ENCODE measurements at regions of chr6 and their contacts with region 1.

Region 1: GRCh38 chr6:53725791-53726431 is 60.4 kb upstream of the KLHL31 start:
- DNase-seq: peak; percentile 85

Region 2: GRCh38 chr6:53492860-53493634 is 232.9 kb before region 1 on chr6:
- CTCF ChIA-PET with region 1: interaction called, 34 read pairs
- POLR2A ChIA-PET with region 1: no interaction called
- DNase-seq: peak; percentile 32

Region 3: DNA sequence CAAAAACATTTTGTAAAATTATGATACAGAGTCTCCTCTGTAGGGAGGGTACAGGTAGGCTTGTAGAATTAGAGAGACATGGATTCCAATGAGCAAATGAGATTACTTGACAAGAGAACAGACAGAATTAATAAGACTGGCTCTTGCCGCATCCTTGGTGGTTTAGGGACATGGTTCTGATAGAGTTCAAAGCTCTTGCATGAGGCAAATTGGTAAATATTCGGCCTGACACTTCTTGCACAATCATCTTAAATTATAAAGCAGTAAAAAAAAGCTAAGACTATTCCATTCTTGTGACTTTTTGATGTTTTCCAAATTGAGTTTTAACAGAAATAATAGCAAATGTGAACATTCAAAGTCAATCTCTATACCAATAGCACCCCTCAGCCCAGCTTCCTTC is 45.4 kb before region 1 on chr6:
- CTCF ChIA-PET with region 1: no interaction called
- POLR2A ChIA-PET with region 1: no interaction called
- DNase-seq: no peak

Region 4: GRCh38 chr6:53710788-53711187 is 15.1 kb before region 1 on chr6:
- CTCF ChIA-PET with region 1: interaction called, 17 read pairs
- POLR2A ChIA-PET with region 1: no interaction called
- DNase-seq: no peak

Region 5: DNA sequence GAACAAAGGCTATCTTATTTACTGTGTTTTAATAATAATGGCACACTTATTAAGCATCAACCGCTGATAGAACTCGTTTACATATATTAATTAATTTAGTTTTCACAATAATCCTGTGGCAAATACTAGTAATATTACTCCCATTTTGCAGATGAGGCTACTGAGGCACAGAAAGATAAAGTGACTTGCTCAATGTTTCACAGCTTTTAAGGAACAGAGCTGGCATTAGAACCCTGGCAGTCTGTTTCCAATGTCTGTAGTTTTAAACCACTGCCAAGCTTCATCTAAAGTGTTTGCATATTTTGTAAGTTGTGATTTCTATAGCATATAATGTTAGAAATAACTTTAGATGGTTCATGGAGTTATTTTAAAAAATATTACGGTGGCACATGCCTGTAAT is 30.5 kb after region 1 on chr6:
- CTCF ChIA-PET with region 1: no interaction called
- POLR2A ChIA-PET with region 1: no interaction called
- DNase-seq: no peak